OCI-LY7 (cell line): ENCODE measurements at regions of chr12 and their contacts with region 1.

Region 1: GRCh38 chr12:94805749-94806529 is 155.6 kb upstream of the TMCC3 start:
- DNase-seq: peak; percentile 82
- H3K4me3 ChIP-seq: peak overlapping the region; percentile 9
- H3K27ac ChIP-seq: peak overlapping the region; percentile 70
- H3K4me1 ChIP-seq: peaks cover 22% of the 10 kb centered on the region
- CTCF ChIP-seq: no peak

Region 2: GRCh38 chr12:94849411-94849976 is 43.6 kb after region 1 on chr12:
- CTCF ChIA-PET with region 1: interaction called, 10 read pairs
- POLR2A ChIA-PET with region 1: no interaction called
- intact Hi-C with region 1: no loop called
- DNase-seq: no peak
- H3K4me3 ChIP-seq: no peak overlapping the region
- H3K27ac ChIP-seq: no peak overlapping the region
- H3K4me1 ChIP-seq: peaks cover 15% of the 10 kb centered on the region
- CTCF ChIP-seq: no peak